ENCODE measurements at regions of chr4 and their contacts with region 1.

Region 1: GRCh38 chr4:75995727-75996126 is 5.0 kb upstream of the SDAD1 start:
- DNase-seq: no peak
- H3K4me3 Mint-ChIP-seq: no peak overlapping the region
- H3K27ac Mint-ChIP-seq: no peak overlapping the region
- H3K4me1 Mint-ChIP-seq: peaks cover 5% of the 10 kb centered on the region
- H3K27me3 Mint-ChIP-seq: no peaks in the 10 kb centered on the region

Region 2: DNA sequence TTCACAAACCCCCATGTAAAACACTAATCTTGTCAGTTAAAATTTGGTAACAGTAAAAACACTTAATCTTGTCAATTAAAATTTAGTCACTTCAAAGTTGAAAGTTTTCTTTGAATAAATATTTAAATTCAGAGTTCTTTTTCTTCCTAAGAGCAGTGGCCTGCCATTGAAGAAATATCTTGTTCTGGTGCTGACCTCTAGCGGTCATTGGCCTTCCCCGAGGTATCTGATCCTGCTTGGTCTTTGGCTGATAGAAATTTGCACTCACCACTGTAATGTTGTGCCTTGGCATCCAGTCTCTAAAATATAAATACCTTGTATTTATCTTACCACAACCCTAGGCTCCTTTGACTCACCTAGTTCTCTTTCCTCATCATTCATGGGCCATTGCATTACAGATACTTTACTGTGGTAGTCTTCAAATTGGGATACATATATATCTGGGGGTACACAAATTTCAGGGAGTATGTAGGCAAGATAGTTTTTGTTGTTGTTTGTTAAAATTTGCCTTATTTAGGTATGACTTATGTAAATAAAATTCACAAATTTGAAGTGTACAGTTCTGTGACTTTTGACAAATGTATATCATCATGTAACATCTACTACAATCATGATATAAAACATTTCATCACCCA is 72.0 kb after region 1 on chr4:
- intact Hi-C with region 1: loop called (anchors 1 kb)
- DNase-seq: peak; percentile 45
- H3K4me3 Mint-ChIP-seq: no peak overlapping the region
- H3K27ac Mint-ChIP-seq: no peak overlapping the region
- H3K4me1 Mint-ChIP-seq: peaks cover 2% of the 10 kb centered on the region
- H3K27me3 Mint-ChIP-seq: no peaks in the 10 kb centered on the region

Region 3: DNA sequence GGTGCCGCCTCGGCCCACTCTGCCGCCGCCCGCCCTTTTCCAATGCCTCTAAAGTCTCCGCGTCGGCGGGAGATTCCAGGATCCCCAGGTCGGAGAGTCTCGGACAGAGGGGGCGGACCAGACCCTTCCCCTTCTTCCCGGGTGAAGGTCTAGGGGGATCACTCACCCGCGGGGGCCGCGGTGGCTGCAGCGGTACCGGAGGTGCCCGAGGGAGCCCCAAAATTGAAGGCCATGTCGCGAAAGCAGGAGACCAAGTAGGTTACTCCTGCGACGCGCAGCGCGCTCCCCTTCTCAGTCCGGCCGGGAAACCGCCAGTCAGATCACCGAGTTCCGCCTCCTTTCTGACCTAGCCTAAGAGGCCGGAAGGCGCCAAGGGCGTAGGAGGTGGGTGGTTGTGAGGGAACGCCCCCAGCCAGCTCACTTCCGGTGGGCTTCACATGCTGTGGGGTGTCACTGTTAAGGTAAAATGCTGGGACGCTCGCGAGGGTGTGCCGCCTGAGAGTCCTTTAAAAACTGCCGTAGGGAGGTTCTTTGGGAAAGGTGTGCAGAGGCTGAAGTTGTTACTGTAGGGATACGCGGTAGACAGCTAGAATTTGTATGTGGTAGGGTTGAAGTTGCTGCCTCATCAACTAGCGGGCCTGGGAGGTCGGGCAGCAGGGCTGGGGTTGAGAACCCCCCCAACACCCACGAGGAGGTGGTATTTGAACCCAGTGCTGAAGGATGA is 152.6 kb after region 1 on chr4 and contains the start of gene NUP54:
- intact Hi-C with region 1: loop called (anchors 1 kb)
- DNase-seq: peak; percentile 94
- H3K4me3 Mint-ChIP-seq: peak within 1 kb of the TSS; percentile 89
- H3K27ac Mint-ChIP-seq: peak within 1 kb of the TSS; percentile 94
- H3K4me1 Mint-ChIP-seq: peaks cover 23% of the 10 kb centered on the region
- H3K27me3 Mint-ChIP-seq: no peaks in the 10 kb centered on the region
- total RNA-seq, gene NUP54: 74.7 and 75.6 TPM in 2 replicates

Measured in activated T-helper 2 cell treated with anti-CD3 and anti-CD28 coated beads, Interferon-gamma antibody, Interleukin-2, Interleukin-4, amounts not matched to agents 10 μg/mL and 5 μg/mL and 100 μg/mL, durations not matched to agents 14 hours and 24 hours and 36 hours (primary cell).